ENCODE measurements at regions of chr13 and their contacts with region 1.

Region 1: DNA sequence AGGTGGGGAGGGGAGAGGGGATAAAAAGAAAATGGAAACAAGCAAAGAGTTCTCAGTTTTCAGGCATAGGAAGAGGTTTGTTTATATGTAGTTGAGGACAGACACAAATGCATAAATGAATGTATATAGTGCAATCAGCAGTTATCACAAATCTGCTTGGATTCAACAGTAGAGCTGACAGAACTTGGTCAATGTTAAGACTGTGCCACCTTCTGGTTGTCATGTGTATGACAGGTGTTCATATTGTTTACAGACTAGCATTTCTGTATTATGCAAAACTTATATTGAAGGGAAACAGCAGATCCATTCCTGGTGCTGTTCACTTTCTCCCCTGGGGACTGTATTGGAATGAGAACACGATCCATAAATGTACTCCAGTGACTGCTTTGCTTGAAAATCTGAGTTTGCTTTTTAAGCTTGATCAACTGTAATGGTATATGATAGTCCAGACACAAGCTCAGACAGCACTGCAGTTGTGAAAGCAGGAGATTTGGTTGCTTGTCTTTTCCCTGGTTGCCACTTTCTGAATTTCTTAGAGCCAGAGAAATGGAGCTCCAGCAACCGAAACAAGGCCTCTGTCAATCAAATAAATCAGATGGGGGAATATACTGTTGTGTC is 319.5 kb upstream of the OBI1 start:
- DNase-seq: peak; percentile 13 to 56
- ATAC-seq: peak; percentile 78 to 86; a peak in 5 of 6 replicates
- H3K4me3 ChIP-seq: no peak overlapping the region
- H3K27ac ChIP-seq: no peak overlapping the region
- H3K4me1 ChIP-seq: no peaks in the 10 kb centered on the region
- CTCF ChIP-seq: peak; percentile 58
- EP300 ChIP-seq: no peak
- POLR2A ChIP-seq: no peak
- RAD21 ChIP-seq: peak; percentile 57 to 58; a peak in 4 of 5 replicates

Region 2: DNA sequence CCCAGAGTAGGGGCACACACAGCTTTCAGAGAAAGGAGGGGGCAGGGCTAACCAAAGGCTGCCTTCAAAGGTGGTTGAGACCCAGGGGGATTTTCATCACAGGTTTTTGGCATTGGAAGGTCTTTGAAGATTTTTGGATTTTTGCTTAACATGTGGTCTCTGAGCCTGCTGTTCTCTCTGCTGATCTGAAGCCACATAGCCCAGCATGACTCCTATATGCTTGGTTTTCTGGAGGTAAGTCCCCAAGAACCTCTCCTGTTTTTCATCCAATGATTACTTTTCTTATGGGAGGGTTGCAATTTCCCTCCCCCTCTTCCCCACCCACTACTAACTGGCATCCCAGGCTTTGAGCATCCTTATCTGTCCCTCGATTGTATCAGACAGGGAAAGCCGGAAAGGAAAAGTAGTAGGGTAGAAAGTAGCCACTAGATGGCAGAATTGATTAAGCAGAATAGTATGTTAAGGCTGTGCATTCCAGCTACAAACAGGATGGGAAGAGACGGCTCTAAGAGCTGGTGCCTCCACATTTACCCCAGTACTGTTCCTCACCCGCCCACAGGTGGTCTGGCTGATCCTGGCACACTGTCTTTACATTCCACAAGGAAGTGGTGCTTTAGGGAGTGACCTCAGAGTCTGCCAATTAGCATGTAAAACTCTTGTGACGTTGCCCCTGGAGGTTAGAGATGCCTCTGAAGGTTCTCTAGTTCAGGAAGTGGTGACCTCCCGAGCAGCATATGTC is 840.9 kb before region 1 on chr13:
- CTCF ChIA-PET with region 1: interaction called, 29 read pairs
- POLR2A ChIA-PET with region 1: no interaction called
- DNase-seq: peak; percentile 6 to 50
- ATAC-seq: peak; percentile 98 to 99
- H3K4me3 ChIP-seq: no peak overlapping the region
- H3K27ac ChIP-seq: no peak overlapping the region
- H3K4me1 ChIP-seq: no peaks in the 10 kb centered on the region
- CTCF ChIP-seq: peak; percentile 54
- EP300 ChIP-seq: no peak
- POLR2A ChIP-seq: no peak
- RAD21 ChIP-seq: peak; percentile 63 to 66